ENCODE measurements at regions of chr7 and their contacts with region 1.

Region 1: GRCh38 chr7:77940647-77941046 is 142.1 kb downstream of the PHTF2 start:
- DNase-seq: peak in 1 of 2 experiments; percentile 31
- H3K4me3 ChIP-seq: no peak overlapping the region
- H3K4me3 Mint-ChIP-seq: no peak overlapping the region
- H3K27ac Mint-ChIP-seq: no peak overlapping the region
- H3K4me1 ChIP-seq: peaks cover 10% of the 10 kb centered on the region
- H3K4me1 Mint-ChIP-seq: peaks cover 21% of the 10 kb centered on the region
- H3K27me3 ChIP-seq: no peaks in the 10 kb centered on the region
- H3K27me3 Mint-ChIP-seq: no peaks in the 10 kb centered on the region
- CTCF ChIP-seq: peak; percentile 42 to 72

Region 2: GRCh38 chr7:77276120-77276519 is 664.5 kb before region 1 on chr7:
- CTCF ChIA-PET with region 1: no interaction called
- POLR2A ChIA-PET with region 1: no interaction called
- intact Hi-C with region 1: no loop called
- DNase-seq: no peak
- H3K4me3 ChIP-seq: no peak overlapping the region
- H3K4me3 Mint-ChIP-seq: no peak overlapping the region
- H3K27ac Mint-ChIP-seq: no peak overlapping the region
- H3K4me1 ChIP-seq: no peaks in the 10 kb centered on the region
- H3K4me1 Mint-ChIP-seq: no peaks in the 10 kb centered on the region
- H3K27me3 ChIP-seq: no peaks in the 10 kb centered on the region
- H3K27me3 Mint-ChIP-seq: peaks cover 8% of the 10 kb centered on the region
- CTCF ChIP-seq: no peak

Region 3: GRCh38 chr7:77657427-77658224 is 283.0 kb before region 1 on chr7:
- CTCF ChIA-PET with region 1: no interaction called
- POLR2A ChIA-PET with region 1: no interaction called
- intact Hi-C with region 1: loop called (anchors 10 kb)
- DNase-seq: peak in 1 of 2 experiments; percentile 59
- H3K4me3 ChIP-seq: no peak overlapping the region
- H3K4me3 Mint-ChIP-seq: no peak overlapping the region
- H3K27ac Mint-ChIP-seq: no peak overlapping the region
- H3K4me1 ChIP-seq: peaks cover 10% of the 10 kb centered on the region; the same call in 1 of the 2 replicates
- H3K4me1 Mint-ChIP-seq: peaks cover 18% of the 10 kb centered on the region
- H3K27me3 ChIP-seq: no peaks in the 10 kb centered on the region
- H3K27me3 Mint-ChIP-seq: no peaks in the 10 kb centered on the region
- CTCF ChIP-seq: peak; percentile 64 to 72

Region 4: GRCh38 chr7:77823787-77824186 is 116.9 kb before region 1 on chr7:
- CTCF ChIA-PET with region 1: no interaction called
- POLR2A ChIA-PET with region 1: no interaction called
- intact Hi-C with region 1: no loop called
- DNase-seq: no peak
- H3K4me3 ChIP-seq: no peak overlapping the region
- H3K4me3 Mint-ChIP-seq: no peak overlapping the region
- H3K27ac Mint-ChIP-seq: no peak overlapping the region
- H3K4me1 ChIP-seq: no peaks in the 10 kb centered on the region
- H3K4me1 Mint-ChIP-seq: peaks cover 7% of the 10 kb centered on the region
- H3K27me3 ChIP-seq: no peaks in the 10 kb centered on the region
- H3K27me3 Mint-ChIP-seq: no peaks in the 10 kb centered on the region
- CTCF ChIP-seq: no peak

Region 5: GRCh38 chr7:77975672-77976480 is 35.2 kb after region 1 on chr7:
- CTCF ChIA-PET with region 1: no interaction called
- POLR2A ChIA-PET with region 1: no interaction called
- intact Hi-C with region 1: loop called (anchors 2 kb)
- DNase-seq: no peak
- H3K4me3 ChIP-seq: no peak overlapping the region
- H3K4me3 Mint-ChIP-seq: no peak overlapping the region
- H3K27ac Mint-ChIP-seq: no peak overlapping the region
- H3K4me1 ChIP-seq: no peaks in the 10 kb centered on the region
- H3K4me1 Mint-ChIP-seq: no peaks in the 10 kb centered on the region
- H3K27me3 ChIP-seq: no peaks in the 10 kb centered on the region
- H3K27me3 Mint-ChIP-seq: no peaks in the 10 kb centered on the region
- CTCF ChIP-seq: no peak

Region 6: GRCh38 chr7:78037603-78038002 is 97.0 kb after region 1 on chr7:
- CTCF ChIA-PET with region 1: no interaction called
- POLR2A ChIA-PET with region 1: no interaction called
- intact Hi-C with region 1: loop called (anchors 2 kb)
- DNase-seq: no peak
- H3K4me3 ChIP-seq: no peak overlapping the region
- H3K4me3 Mint-ChIP-seq: no peak overlapping the region
- H3K27ac Mint-ChIP-seq: no peak overlapping the region
- H3K4me1 ChIP-seq: no peaks in the 10 kb centered on the region
- H3K4me1 Mint-ChIP-seq: no peaks in the 10 kb centered on the region
- H3K27me3 ChIP-seq: no peaks in the 10 kb centered on the region
- H3K27me3 Mint-ChIP-seq: peaks cover 20% of the 10 kb centered on the region
- CTCF ChIP-seq: no peak

Region 7: GRCh38 chr7:78226059-78226719 is 285.5 kb after region 1 on chr7:
- CTCF ChIA-PET with region 1: no interaction called
- POLR2A ChIA-PET with region 1: no interaction called
- intact Hi-C with region 1: loop called (anchors 1 kb)
- DNase-seq: peak in 1 of 2 experiments; percentile 58
- H3K4me3 ChIP-seq: no peak overlapping the region
- H3K4me3 Mint-ChIP-seq: no peak overlapping the region
- H3K27ac Mint-ChIP-seq: no peak overlapping the region
- H3K4me1 ChIP-seq: no peaks in the 10 kb centered on the region
- H3K4me1 Mint-ChIP-seq: no peaks in the 10 kb centered on the region
- H3K27me3 ChIP-seq: no peaks in the 10 kb centered on the region
- H3K27me3 Mint-ChIP-seq: peaks cover 10% of the 10 kb centered on the region
- CTCF ChIP-seq: peak; percentile 29 to 41

Region 8: GRCh38 chr7:78434281-78434680 is 493.6 kb after region 1 on chr7:
- CTCF ChIA-PET with region 1: no interaction called
- POLR2A ChIA-PET with region 1: no interaction called
- intact Hi-C with region 1: loop called (anchors 2 kb)
- DNase-seq: peak in 1 of 2 experiments; percentile 16
- H3K4me3 ChIP-seq: no peak overlapping the region
- H3K4me3 Mint-ChIP-seq: no peak overlapping the region
- H3K27ac Mint-ChIP-seq: no peak overlapping the region
- H3K4me1 ChIP-seq: no peaks in the 10 kb centered on the region
- H3K4me1 Mint-ChIP-seq: peaks cover 3% of the 10 kb centered on the region
- H3K27me3 ChIP-seq: no peaks in the 10 kb centered on the region
- H3K27me3 Mint-ChIP-seq: peaks cover 2% of the 10 kb centered on the region
- CTCF ChIP-seq: peak; percentile 13 to 54